CD4-positive, alpha-beta T cell (primary cell): ENCODE measurements at regions of chr17 and their contacts with region 1.

Region 1: GRCh38 chr17:73231841-73232586 is 29.7 kb downstream of the CPSF4L start:
- DNase-seq: peak; percentile 92 to 97 (median 96)
- ATAC-seq: peak; percentile 94
- H3K4me3 ChIP-seq: peak overlapping the region; percentile 99
- H3K4me3 Mint-ChIP-seq: peak overlapping the region; percentile 97
- H3K27ac ChIP-seq: peak overlapping the region; percentile 64 to 72
- H3K27ac Mint-ChIP-seq: peak overlapping the region; percentile 96
- H3K4me1 ChIP-seq: peaks cover 43% of the 10 kb centered on the region
- H3K4me1 Mint-ChIP-seq: peaks cover 80% of the 10 kb centered on the region
- H3K27me3 ChIP-seq: no peaks in the 10 kb centered on the region
- H3K27me3 Mint-ChIP-seq: no peaks in the 10 kb centered on the region
- CTCF ChIP-seq: no peak

Region 2: DNA sequence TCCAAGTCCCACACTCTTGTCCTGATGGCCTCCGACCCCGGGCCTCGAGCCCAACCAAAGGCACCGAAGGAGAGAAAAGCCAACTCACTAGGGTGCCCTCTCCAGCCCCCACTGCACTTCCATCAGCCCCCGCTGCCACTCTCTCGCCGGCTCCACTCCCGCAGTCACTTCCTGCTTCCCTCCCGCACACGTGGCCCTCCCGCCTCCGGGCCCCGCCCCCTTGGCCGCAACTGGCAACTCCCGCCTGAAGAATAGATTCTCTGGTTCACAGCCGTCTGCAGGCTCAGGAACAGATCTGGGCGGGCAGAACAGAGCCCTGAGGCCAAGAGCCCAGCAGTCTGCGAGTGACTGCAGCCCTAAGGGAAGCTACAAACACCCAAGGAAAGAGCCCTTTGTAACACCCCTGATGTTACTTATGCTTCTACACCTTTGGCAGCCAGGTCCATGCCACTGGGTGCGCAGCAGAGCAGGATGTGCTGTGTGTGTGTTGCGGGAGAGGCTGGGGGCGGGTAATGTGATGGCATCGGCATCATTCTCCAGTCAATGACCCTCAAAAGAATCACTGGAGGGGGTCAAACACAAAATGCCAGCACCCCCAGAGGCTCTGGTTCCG is 139.4 kb before region 1 on chr17 and contains the start of gene SLC39A11:
- CTCF ChIA-PET with region 1: no interaction called
- POLR2A ChIA-PET with region 1: interaction called, 3 read pairs
- intact Hi-C with region 1: loop called in 1 of 2 experiments (anchors 2 kb)
- DNase-seq: peak; percentile 72 to 95 (median 87)
- ATAC-seq: peak; percentile 96
- H3K4me3 ChIP-seq: peak within 1 kb of the TSS; percentile 77
- H3K4me3 Mint-ChIP-seq: peak within 1 kb of the TSS; percentile 91
- H3K27ac ChIP-seq: peak within 1 kb of the TSS in 1 of 2 donors; percentile 18
- H3K27ac Mint-ChIP-seq: peak within 1 kb of the TSS; percentile 80
- H3K4me1 ChIP-seq: peaks cover 24% of the 10 kb centered on the region
- H3K4me1 Mint-ChIP-seq: peaks cover 36% of the 10 kb centered on the region
- H3K27me3 ChIP-seq: peaks cover 0 to 4% of the 10 kb centered on the region in 2 experiments
- H3K27me3 Mint-ChIP-seq: no peaks in the 10 kb centered on the region
- CTCF ChIP-seq: no peak
- total RNA-seq, gene SLC39A11: 9.7 to 12.2 TPM

Region 3: GRCh38 chr17:73203135-73203787 is 28.8 kb before region 1 on chr17:
- CTCF ChIA-PET with region 1: no interaction called
- POLR2A ChIA-PET with region 1: interaction called, 17 read pairs
- intact Hi-C with region 1: loop called in 1 of 2 experiments (anchors 2 kb)
- DNase-seq: peak in 2 of 14 experiments; percentile 34 to 52
- ATAC-seq: peak; percentile 65
- H3K4me3 ChIP-seq: no peak overlapping the region
- H3K4me3 Mint-ChIP-seq: peak overlapping the region; percentile 43
- H3K27ac ChIP-seq: peak overlapping the region; percentile 8 to 33
- H3K27ac Mint-ChIP-seq: peak overlapping the region; percentile 87
- H3K4me1 ChIP-seq: peaks cover 24% of the 10 kb centered on the region
- H3K4me1 Mint-ChIP-seq: peaks cover 24% of the 10 kb centered on the region
- H3K27me3 ChIP-seq: no peaks in the 10 kb centered on the region
- H3K27me3 Mint-ChIP-seq: no peaks in the 10 kb centered on the region
- CTCF ChIP-seq: no peak

Region 4: GRCh38 chr17:73215447-73215846 is 16.6 kb before region 1 on chr17:
- CTCF ChIA-PET with region 1: interaction called, 5 read pairs
- POLR2A ChIA-PET with region 1: interaction called, 39 read pairs
- intact Hi-C with region 1: loop called (anchors 1 to 2 kb)
- DNase-seq: no peak
- ATAC-seq: no peak
- H3K4me3 ChIP-seq: no peak overlapping the region
- H3K4me3 Mint-ChIP-seq: no peak overlapping the region
- H3K27ac ChIP-seq: no peak overlapping the region
- H3K27ac Mint-ChIP-seq: peak overlapping the region; percentile 24
- H3K4me1 ChIP-seq: peaks cover 26% of the 10 kb centered on the region
- H3K4me1 Mint-ChIP-seq: peaks cover 42% of the 10 kb centered on the region
- H3K27me3 ChIP-seq: no peaks in the 10 kb centered on the region
- H3K27me3 Mint-ChIP-seq: no peaks in the 10 kb centered on the region
- CTCF ChIP-seq: no peak

Region 5: GRCh38 chr17:73759734-73760438 is 527.9 kb after region 1 on chr17:
- CTCF ChIA-PET with region 1: no interaction called
- POLR2A ChIA-PET with region 1: no interaction called
- intact Hi-C with region 1: no loop called
- DNase-seq: no peak
- ATAC-seq: no peak
- H3K4me3 ChIP-seq: no peak overlapping the region
- H3K4me3 Mint-ChIP-seq: no peak overlapping the region
- H3K27ac ChIP-seq: no peak overlapping the region
- H3K27ac Mint-ChIP-seq: peak overlapping the region; percentile 24
- H3K4me1 ChIP-seq: peaks cover 14% of the 10 kb centered on the region
- H3K4me1 Mint-ChIP-seq: peaks cover 30% of the 10 kb centered on the region
- H3K27me3 ChIP-seq: no peaks in the 10 kb centered on the region
- H3K27me3 Mint-ChIP-seq: no peaks in the 10 kb centered on the region
- CTCF ChIP-seq: no peak

Region 6: DNA sequence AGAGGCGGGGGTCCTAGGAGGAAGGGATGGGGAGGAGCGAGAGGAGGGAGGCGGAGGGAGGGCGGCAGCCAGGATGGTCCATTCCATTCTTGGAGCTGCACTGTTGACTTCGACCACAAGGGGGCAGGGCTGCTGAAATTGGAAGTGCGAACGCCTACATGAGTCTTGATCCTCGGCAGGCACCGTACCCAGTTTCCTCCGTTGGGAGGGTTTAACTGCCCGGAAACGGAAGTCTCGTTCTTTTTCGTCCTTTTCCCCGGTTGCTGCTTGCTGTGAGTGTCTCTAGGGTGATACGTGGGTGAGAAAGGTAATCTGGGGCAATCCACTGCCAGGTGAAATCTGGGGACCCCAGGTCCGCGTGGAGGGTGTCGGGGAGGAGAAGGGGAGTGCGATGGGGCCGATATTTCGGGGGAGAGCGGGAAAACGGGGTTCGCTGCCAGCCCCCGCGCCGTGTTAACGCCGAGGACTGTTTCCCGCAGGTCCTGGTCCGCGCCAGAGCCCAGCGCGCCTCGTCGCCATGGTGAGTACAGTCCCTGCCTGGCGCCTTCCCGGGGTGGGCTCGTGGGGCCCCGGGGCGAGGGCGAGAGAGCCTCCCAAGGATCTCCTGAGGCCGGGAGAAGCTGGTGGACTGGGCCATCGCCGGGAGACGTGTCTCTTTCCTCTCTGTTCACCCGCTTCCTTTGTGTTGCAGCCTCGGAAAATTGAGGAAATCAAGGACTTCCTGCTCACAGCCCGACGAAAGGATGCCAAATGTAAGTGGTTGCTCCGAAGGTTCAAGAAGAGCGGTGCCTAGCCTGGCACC is 971.6 kb after region 1 on chr17 and contains the start of gene RPL38:
- CTCF ChIA-PET with region 1: no interaction called
- POLR2A ChIA-PET with region 1: no interaction called
- intact Hi-C with region 1: loop called in 1 of 2 experiments (anchors 5 kb)
- DNase-seq: peak; percentile 88 to 97 (median 95)
- ATAC-seq: peak; percentile 85
- H3K4me3 ChIP-seq: peak within 1 kb of the TSS; percentile 97
- H3K4me3 Mint-ChIP-seq: peak within 1 kb of the TSS; percentile 94
- H3K27ac ChIP-seq: peak within 1 kb of the TSS; percentile 69 to 87
- H3K27ac Mint-ChIP-seq: peak within 1 kb of the TSS; percentile 82
- H3K4me1 ChIP-seq: peaks cover 59% of the 10 kb centered on the region
- H3K4me1 Mint-ChIP-seq: peaks cover 44% of the 10 kb centered on the region
- H3K27me3 ChIP-seq: peaks cover 18 to 24% of the 10 kb centered on the region in 2 experiments
- H3K27me3 Mint-ChIP-seq: peaks cover 16% of the 10 kb centered on the region
- CTCF ChIP-seq: peak; percentile 89
- total RNA-seq, gene RPL38: 2,305 to 2,531 TPM